ENCODE measurements at regions of chr12 and their contacts with region 1.

Region 1: DNA sequence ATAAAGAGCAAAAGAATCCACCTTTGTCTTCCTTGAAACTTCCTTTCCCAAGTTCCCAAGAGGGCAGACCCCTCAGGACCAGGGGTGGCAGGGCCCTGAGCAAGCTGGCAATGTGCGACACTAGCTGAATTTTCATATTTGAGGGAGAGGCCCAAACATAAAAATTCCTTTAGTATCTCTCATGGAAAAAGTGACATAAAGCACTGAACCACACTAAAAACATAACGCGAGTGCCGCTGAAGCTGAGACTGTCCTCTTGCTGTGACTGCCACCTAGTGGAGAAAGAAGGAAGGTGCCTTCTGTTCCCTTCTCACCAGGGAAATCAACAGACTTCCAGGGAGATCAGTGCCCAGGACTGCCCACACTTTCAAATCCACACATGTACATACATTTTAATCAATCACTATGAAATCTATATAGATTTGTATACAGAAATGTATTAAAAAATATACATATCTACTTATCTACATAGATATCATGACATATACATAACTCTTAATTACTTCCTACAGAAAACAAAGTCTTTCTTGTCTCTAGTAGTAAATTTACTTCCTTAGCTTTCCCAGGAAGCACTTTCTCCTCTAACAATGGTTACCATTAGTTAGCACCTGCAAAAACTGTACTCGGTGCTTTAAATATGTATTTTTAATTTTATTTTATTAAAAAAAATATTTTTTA is 53.8 kb downstream of the SSH1 start:
- DNase-seq: peak; percentile 86
- H3K4me3 ChIP-seq: peak overlapping the region in 1 of 2 experiments; percentile 36; a peak in 1 of 4 replicates
- H3K27ac ChIP-seq: peak overlapping the region; percentile 80 to 97
- H3K4me1 ChIP-seq: peaks cover 18 to 41% of the 10 kb centered on the region in 2 experiments
- H3K27me3 ChIP-seq: no peaks in the 10 kb centered on the region
- CTCF ChIP-seq: peak; percentile 92
- EP300 ChIP-seq: peak; percentile 24 to 34; a peak in 1 of 4 replicates
- RAD21 ChIP-seq: peak; percentile 98

Region 2: GRCh38 chr12:108633534-108634248 is 169.9 kb before region 1 on chr12 and contains the start of gene SELPLG:
- CTCF ChIA-PET with region 1: interaction called, 12 read pairs
- POLR2A ChIA-PET with region 1: no interaction called
- DNase-seq: no peak
- H3K4me3 ChIP-seq: no peak within 1 kb of the TSS
- H3K27ac ChIP-seq: no peak within 1 kb of the TSS
- H3K4me1 ChIP-seq: peaks cover 20% of the 10 kb centered on the region in 2 experiments; a peak in 3 of 4 replicates
- H3K27me3 ChIP-seq: no peaks in the 10 kb centered on the region
- CTCF ChIP-seq: no peak
- EP300 ChIP-seq: no peak
- RAD21 ChIP-seq: no peak
- polyA plus RNA-seq, gene SELPLG: 2.8 and 3.2 TPM in 2 replicates

Region 3: GRCh38 chr12:108691175-108691997 is 112.2 kb before region 1 on chr12:
- CTCF ChIA-PET with region 1: interaction called, 51 read pairs
- POLR2A ChIA-PET with region 1: no interaction called
- DNase-seq: peak; percentile 77
- H3K4me3 ChIP-seq: peak overlapping the region; percentile 28 to 53
- H3K27ac ChIP-seq: peak overlapping the region; percentile 97 to 99
- H3K4me1 ChIP-seq: peaks cover 43 to 67% of the 10 kb centered on the region in 2 experiments
- H3K27me3 ChIP-seq: no peaks in the 10 kb centered on the region
- CTCF ChIP-seq: peak; percentile 36; the same call in 1 of the 2 replicates
- EP300 ChIP-seq: peak; percentile 77 to 92; a peak in 3 of 4 replicates
- RAD21 ChIP-seq: no peak; the same call in 1 of the 2 replicates

Region 4: DNA sequence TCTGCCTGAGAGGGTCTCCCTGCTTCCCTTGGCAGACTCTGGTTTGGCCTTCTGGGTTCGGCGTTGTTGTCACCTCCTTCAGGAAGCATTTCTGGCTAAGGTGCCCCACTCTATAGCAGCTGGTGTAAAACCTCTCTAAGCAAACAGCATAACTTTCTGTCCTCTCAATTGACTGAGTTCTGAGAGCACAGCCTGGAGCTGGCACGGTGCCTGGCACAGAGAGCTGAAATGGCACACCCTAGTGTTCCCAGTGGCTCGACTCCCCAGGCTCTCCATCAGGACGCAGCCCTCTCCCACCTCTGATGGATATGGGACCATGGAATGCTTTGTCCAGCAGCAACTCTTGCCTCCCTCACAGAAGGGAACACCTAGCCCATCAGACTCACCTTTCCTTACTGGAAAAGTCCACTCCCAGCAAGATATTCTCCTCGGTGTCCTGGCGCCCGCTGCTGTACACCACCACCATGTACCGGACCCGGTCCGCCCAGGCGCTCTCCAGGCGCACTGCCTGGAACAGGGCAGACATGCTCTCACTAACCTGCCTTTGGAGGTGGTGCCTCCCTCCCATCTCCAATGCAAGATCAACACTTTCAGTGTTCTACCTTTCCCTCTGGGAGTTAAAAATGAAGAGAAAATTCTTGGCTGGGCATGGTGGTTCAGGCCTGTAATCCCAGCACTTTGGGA is 13.2 kb after region 1 on chr12:
- CTCF ChIA-PET with region 1: interaction called, 19 read pairs
- POLR2A ChIA-PET with region 1: no interaction called
- DNase-seq: no peak
- H3K4me3 ChIP-seq: no peak overlapping the region
- H3K27ac ChIP-seq: peak overlapping the region in 1 of 2 experiments; percentile 16; a peak in 1 of 4 replicates
- H3K4me1 ChIP-seq: peaks cover 2 to 9% of the 10 kb centered on the region in 2 experiments; a peak in 2 of 4 replicates
- H3K27me3 ChIP-seq: no peaks in the 10 kb centered on the region
- CTCF ChIP-seq: no peak
- EP300 ChIP-seq: no peak
- RAD21 ChIP-seq: no peak

Region 5: GRCh38 chr12:108850854-108851573 is 47.4 kb after region 1 on chr12:
- CTCF ChIA-PET with region 1: interaction called, 29 read pairs
- POLR2A ChIA-PET with region 1: no interaction called
- DNase-seq: peak; percentile 85
- H3K4me3 ChIP-seq: no peak overlapping the region
- H3K27ac ChIP-seq: peak overlapping the region; percentile 72 to 99
- H3K4me1 ChIP-seq: peaks cover 31 to 32% of the 10 kb centered on the region in 2 experiments
- H3K27me3 ChIP-seq: no peaks in the 10 kb centered on the region
- CTCF ChIP-seq: peak; percentile 44
- EP300 ChIP-seq: peak in 1 of 2 experiments; percentile 54; a peak in 1 of 4 replicates
- RAD21 ChIP-seq: peak; percentile 62

Region 6: GRCh38 chr12:109093022-109093918 is 289.7 kb after region 1 on chr12 and contains the start of gene ALKBH2:
- CTCF ChIA-PET with region 1: interaction called, 11 read pairs
- POLR2A ChIA-PET with region 1: no interaction called
- DNase-seq: peak; percentile 90
- H3K4me3 ChIP-seq: peak within 1 kb of the TSS; percentile 60 to 77
- H3K27ac ChIP-seq: peak within 1 kb of the TSS; percentile 54 to 60; a peak in 3 of 4 replicates
- H3K4me1 ChIP-seq: peaks cover 0 to 22% of the 10 kb centered on the region in 2 experiments; a peak in 1 of 4 replicates
- H3K27me3 ChIP-seq: no peaks in the 10 kb centered on the region
- CTCF ChIP-seq: peak; percentile 91
- EP300 ChIP-seq: peak in 1 of 2 experiments; percentile 58; a peak in 2 of 4 replicates
- RAD21 ChIP-seq: peak; percentile 90
- polyA plus RNA-seq, gene ALKBH2: 47.3 and 53.7 TPM in 2 replicates

Measured in SK-N-SH (cell line).